Spleen (tissue), 13 donors: ENCODE measurements at regions of chr9 and their contacts with region 1.

Region 1: GRCh38 chr9:87812375-87813118 is 70.1 kb upstream of the SPATA31E1 start:
- DNase-seq: no peak
- H3K4me3 ChIP-seq: no peak overlapping the region
- H3K27ac ChIP-seq: no peak overlapping the region
- H3K4me1 ChIP-seq: peaks cover 0 to 7% (median 0%) of the 10 kb centered on the region in 6 donors
- H3K27me3 ChIP-seq: peaks cover 0 to 5% (median 0%) of the 10 kb centered on the region in 7 donors
- CTCF ChIP-seq: peak; percentile 31 to 78 (median 68)
- POLR2A ChIP-seq: no peak

Region 2: GRCh38 chr9:87678650-87679515 is 133.7 kb before region 1 on chr9:
- intact Hi-C with region 1: loop called (anchors 5 kb)
- DNase-seq: no peak
- H3K4me3 ChIP-seq: no peak overlapping the region
- H3K27ac ChIP-seq: no peak overlapping the region
- H3K4me1 ChIP-seq: peaks cover 0 to 5% (median 0%) of the 10 kb centered on the region in 6 donors
- H3K27me3 ChIP-seq: no peaks in the 10 kb centered on the region
- CTCF ChIP-seq: peak; percentile 17 to 74 (median 62)
- POLR2A ChIP-seq: no peak